Prostate gland (tissue), 2 donors: ENCODE measurements at regions of chr1 and their contacts with region 1.

Region 1: DNA sequence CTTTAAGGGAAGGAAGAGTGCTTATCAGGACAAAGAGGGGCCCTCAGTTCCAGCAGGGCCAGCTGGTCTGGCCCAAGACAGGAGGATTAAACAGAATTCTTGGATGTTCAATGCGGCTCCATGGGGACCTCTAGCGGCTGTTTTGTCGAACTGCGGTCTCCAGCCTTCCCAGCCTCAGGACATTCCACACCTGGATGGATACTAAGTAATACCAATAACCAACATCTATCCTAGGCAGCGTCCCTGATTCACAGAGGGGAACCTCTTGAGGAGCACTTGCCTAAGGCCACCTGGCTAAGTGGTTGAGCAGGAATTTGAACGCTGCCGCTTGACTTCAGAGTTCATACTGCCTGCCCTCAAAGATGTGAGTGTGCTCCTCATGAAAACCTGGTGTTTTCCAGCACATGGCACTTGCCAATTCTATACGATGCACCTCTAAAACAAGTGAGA is 15.5 kb upstream of the CD247 start:
- DNase-seq: peak; percentile 54
- H3K4me3 ChIP-seq: no peak overlapping the region
- H3K27ac ChIP-seq: no peak overlapping the region
- H3K4me1 ChIP-seq: no peaks in the 10 kb centered on the region
- H3K27me3 ChIP-seq: no peaks in the 10 kb centered on the region
- CTCF ChIP-seq: peak; percentile 40 to 75 (median 70)
- POLR2A ChIP-seq: no peak

Region 2: DNA sequence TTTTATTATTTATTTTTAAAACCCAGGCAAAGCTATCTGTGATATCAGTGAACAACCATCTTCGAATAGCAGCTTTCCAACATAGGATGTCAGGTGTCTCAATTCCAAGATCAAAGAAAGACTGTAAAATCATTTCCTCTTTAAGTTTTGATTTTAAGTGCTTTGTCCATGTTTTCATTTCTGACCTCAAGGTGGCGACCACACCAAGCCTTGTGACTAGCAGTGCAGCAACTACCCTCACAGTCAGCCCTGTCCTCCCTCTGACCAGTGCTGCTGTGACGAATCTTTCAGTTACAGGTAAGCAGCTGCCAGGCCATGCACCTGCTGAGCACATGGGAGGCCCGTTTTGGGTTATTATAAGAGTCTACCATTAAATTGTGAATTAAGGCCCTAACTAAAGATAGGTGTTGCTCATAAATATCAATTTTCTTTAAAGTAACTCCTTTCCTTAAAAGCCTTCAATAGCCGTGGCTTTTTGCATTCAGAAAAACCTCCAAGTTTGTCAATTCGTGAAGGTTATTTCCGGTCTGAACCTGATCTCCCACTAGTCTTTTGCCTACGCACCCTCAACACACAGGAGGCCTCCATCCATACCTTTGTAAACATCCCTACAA is 132.5 kb before region 1 on chr1:
- intact Hi-C with region 1: loop called (anchors 10 kb)
- DNase-seq: peak; percentile 32
- H3K4me3 ChIP-seq: no peak overlapping the region
- H3K27ac ChIP-seq: no peak overlapping the region
- H3K4me1 ChIP-seq: no peaks in the 10 kb centered on the region
- H3K27me3 ChIP-seq: no peaks in the 10 kb centered on the region
- CTCF ChIP-seq: peak in 3 of 4 experiments; percentile 24 to 54 (median 38)
- POLR2A ChIP-seq: no peak

Region 3: DNA sequence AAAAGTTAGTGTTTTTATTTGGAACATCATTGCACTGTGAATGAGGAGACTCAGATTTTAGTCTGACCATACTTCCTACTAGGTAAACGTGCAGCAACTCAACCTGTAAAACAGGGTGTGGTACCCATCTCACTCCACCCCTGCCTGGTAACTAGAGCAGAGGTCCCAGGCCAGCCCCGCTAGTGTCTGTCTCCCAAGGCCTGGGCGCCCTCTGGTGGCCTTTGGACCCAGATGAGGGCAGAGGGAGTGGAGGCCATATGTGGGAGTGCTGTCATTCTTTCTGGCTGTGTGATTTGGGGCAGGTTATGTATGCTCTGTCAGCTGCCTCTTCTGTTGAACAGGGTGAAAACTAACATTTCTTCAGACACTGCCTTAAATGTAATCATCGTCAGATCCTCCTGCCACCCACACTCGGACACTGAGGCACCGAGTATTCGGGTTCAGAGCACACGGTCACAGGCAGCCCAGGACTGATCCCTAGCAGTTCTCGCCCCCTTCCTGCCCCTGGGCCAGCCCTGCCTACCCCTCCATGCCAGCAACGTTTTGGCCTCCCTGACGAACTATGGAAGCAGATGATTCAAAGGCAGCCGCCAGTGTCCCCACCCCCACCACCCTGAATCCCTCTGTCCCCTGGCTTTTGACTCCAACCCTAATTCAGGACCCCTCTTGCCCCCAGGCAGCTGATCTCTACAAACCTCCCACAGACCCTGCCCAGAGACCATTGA is 91.6 kb before region 1 on chr1:
- intact Hi-C with region 1: loop called (anchors 5 kb)
- DNase-seq: peak; percentile 83
- H3K4me3 ChIP-seq: no peak overlapping the region
- H3K27ac ChIP-seq: no peak overlapping the region
- H3K4me1 ChIP-seq: no peaks in the 10 kb centered on the region
- H3K27me3 ChIP-seq: peaks cover 2% of the 10 kb centered on the region
- CTCF ChIP-seq: peak; percentile 58 to 90 (median 83)
- POLR2A ChIP-seq: no peak

Region 4: DNA sequence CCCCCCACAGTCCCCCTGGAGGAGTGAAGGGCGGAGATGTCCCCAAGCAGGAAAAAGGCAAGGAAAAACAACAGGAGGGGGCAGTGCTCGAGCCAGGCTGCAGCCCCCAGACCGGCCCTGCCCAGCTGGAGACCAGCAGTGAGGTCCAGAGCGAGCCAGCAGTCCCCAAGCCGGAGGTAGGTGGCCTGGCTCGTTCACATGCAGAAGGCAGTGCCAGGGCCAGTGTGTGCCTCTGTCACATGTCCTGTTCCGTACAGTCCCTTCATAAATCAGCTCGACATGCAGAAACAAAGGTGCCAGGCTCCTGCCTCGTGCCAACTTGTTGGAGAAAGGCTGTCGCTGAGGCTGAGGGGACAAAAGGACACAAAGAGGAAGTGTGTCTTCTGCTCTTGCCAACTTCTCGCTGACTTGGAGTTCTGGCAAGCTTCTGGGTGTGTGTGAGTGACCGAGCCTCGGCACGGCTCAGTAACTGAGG is 163.8 kb after region 1 on chr1:
- intact Hi-C with region 1: no loop called
- DNase-seq: peak; percentile 93
- H3K4me3 ChIP-seq: no peak overlapping the region
- H3K27ac ChIP-seq: peak overlapping the region; percentile 20 to 47
- H3K4me1 ChIP-seq: peaks cover 5% of the 10 kb centered on the region
- H3K27me3 ChIP-seq: no peaks in the 10 kb centered on the region
- CTCF ChIP-seq: peak in 2 of 4 experiments; percentile 7 to 25
- POLR2A ChIP-seq: no peak